H1 (cell line): ENCODE measurements at regions of chr19 and their contacts with region 1.

Region 1: DNA sequence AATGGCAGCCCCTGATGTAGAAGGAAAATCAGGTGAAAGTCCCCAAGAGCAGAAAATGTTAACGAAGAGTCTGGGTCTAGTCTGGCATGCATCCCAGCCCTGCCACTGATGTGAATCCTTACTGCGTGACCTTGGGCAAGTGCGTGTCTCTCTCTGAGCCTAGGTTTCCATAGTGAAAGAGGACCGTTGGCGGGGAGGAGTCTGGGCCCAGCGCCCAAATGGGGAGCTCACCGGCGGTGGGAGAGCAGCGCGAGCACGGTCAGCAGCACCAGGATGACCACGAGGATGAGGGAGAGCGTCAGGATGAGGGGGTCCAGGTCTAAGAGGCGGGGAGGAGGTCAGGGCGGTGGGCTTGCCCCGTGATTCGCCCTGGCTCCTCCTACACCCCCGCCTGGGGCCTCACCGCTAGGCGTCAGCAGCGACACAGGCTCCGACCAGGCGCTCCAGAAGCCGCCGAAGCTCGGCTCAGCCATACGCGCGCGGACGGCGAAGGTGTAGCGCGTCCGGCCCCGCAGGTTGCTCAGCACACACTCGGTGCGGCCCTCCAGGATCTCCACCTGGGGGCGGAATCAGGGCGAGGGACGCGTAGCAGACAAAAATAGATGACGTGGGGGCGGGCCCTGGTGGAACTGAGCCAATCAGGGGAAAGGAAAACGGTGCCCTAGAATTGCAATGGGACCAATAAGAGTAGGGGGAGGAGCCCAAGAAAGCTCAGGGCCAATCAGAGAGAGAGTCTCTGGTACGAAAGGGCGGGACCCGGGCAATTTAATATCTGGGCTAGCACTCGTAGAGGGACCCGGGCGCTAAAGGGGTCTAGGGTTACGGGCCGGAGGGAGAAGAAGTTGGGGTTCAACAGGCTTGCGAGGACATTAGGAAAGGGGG is 3.2 kb downstream of the EPOR start:
- DNase-seq: peak; percentile 93 to 95
- H3K4me3 ChIP-seq: peak overlapping the region; percentile 55 to 79 (median 69)
- H3K27ac ChIP-seq: peak overlapping the region; percentile 76; the same call in 1 of the 2 replicates
- H3K4me1 ChIP-seq: peaks cover 0 to 11% (median 5%) of the 10 kb centered on the region in 4 experiments; a peak in 5 of 7 replicates
- H3K27me3 ChIP-seq: no peaks in the 10 kb centered on the region
- CTCF ChIP-seq: peak; percentile 60 to 71 (median 67)
- EP300 ChIP-seq: no peak; a peak in 1 of 3 replicates
- POLR2A ChIP-seq: peak; percentile 81 to 85
- RAD21 ChIP-seq: peak; percentile 50 to 66

Region 2: GRCh38 chr19:11321191-11322126 is 59.4 kb before region 1 on chr19:
- CTCF ChIA-PET with region 1: interaction called, 13 read pairs
- POLR2A ChIA-PET with region 1: interaction called, 5 read pairs
- DNase-seq: no peak
- H3K4me3 ChIP-seq: no peak overlapping the region
- H3K27ac ChIP-seq: no peak overlapping the region
- H3K4me1 ChIP-seq: peaks cover 0 to 5% (median 0%) of the 10 kb centered on the region in 4 experiments; a peak in 3 of 7 replicates
- H3K27me3 ChIP-seq: no peaks in the 10 kb centered on the region
- CTCF ChIP-seq: peak; percentile 40 to 62 (median 42)
- EP300 ChIP-seq: no peak
- POLR2A ChIP-seq: no peak
- RAD21 ChIP-seq: peak in 1 of 2 experiments; percentile 37; a peak in 1 of 4 replicates

Region 3: DNA sequence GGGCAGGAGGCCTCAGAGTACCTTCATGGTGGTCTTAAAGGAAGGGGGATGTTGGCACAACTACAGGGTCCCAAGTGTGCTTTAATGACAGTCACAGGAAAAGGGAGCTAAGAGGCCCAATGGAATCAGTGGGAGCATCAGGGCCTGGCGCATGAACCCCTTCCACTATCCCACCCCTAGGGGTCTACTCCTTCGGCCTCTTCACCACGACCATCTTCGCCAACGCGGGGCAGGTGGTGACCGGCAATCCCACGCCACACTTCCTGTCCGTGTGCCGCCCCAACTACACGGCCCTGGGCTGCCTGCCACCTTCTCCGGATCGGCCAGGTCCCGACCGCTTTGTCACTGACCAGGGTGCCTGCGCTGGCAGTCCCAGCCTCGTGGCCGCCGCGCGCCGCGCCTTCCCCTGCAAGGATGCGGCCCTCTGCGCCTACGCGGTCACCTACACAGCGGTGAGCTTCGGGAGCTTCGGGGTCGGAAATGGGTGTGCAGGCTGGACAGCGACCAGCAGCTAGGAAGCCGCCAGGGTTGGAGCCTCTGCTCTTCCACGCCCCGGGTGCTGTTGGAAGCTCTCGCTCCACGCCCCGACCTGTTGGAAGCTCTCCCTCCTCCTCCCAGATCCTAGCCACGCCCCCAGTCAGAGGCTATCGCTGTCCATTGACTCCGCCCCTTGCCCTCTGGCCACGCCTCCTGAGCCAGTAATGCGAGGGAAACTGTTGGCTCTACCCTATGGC is 19.7 kb before region 1 on chr19:
- CTCF ChIA-PET with region 1: interaction called, 49 read pairs
- POLR2A ChIA-PET with region 1: interaction called, 34 read pairs
- DNase-seq: peak in 1 of 2 experiments; percentile 100
- H3K4me3 ChIP-seq: peak overlapping the region; percentile 46 to 62 (median 56)
- H3K27ac ChIP-seq: 0 out of 2 replicates have a peak overlapping the region, but pooled peaks have one; percentile 19
- H3K4me1 ChIP-seq: peaks cover 0 to 9% (median 5%) of the 10 kb centered on the region in 4 experiments
- H3K27me3 ChIP-seq: peaks cover 0 to 11% (median 5%) of the 10 kb centered on the region in 4 experiments; a peak in 3 of 7 replicates
- CTCF ChIP-seq: peak; percentile 19 to 44 (median 44); a peak in 3 of 4 replicates
- EP300 ChIP-seq: no peak
- POLR2A ChIP-seq: peak in 1 of 2 experiments; percentile 46; a peak in 1 of 3 replicates
- RAD21 ChIP-seq: no peak

Region 4: GRCh38 chr19:11399667-11400066 is 18.8 kb after region 1 on chr19:
- CTCF ChIA-PET with region 1: interaction called, 17 read pairs
- POLR2A ChIA-PET with region 1: interaction called, 16 read pairs
- DNase-seq: no peak
- H3K4me3 ChIP-seq: no peak overlapping the region
- H3K27ac ChIP-seq: no peak overlapping the region
- H3K4me1 ChIP-seq: peaks cover 0 to 2% (median 0%) of the 10 kb centered on the region in 4 experiments; a peak in 1 of 7 replicates
- H3K27me3 ChIP-seq: no peaks in the 10 kb centered on the region
- CTCF ChIP-seq: no peak
- EP300 ChIP-seq: no peak
- POLR2A ChIP-seq: no peak
- RAD21 ChIP-seq: no peak

Region 5: DNA sequence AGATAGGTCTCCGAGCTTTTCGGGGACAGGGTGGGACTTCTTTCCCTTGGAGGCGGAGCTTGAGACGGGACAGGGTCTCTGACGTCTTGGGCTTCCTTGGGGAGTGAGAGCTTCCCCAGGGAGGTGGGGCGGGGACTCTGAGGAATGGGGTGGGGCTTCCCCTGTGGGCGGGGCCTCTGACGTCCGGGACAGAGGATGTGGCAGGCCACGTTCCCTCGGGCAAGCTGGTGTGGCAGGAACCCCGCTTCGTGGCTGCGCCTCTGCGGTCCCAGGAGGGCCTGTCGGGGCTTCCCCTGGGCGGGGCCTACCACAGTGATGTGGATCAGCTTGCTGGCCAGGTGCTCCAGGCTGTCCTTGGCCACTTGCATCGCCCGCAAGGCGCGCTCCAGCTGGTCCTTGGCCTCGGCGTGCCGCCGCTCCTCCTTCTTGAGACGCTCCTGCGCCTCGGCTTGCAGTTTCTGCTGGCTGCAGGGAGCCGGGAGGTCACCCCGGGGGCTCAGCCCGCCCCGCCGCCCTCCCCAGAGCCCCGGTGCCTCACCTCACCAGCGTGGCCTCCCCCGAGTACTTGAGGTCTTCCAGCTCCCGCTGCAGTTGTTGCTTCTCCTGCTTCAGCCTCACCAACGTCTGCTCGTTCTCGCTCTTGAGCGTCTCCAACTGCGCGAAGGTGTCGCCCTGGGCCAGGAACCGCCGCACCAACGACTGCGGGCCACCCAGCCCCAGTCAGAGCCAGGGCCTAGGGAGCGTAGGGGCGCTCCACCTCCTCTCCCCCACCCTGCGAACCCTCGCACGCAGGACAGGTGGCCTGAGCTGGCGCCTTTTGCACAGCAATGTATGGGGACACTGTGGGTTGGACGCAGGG is 41.5 kb after region 1 on chr19:
- CTCF ChIA-PET with region 1: interaction called, 197 read pairs
- POLR2A ChIA-PET with region 1: interaction called, 48 read pairs
- DNase-seq: peak; percentile 88 to 99
- H3K4me3 ChIP-seq: peak overlapping the region; percentile 37 to 76 (median 53)
- H3K27ac ChIP-seq: no peak overlapping the region
- H3K4me1 ChIP-seq: peaks cover 0 to 14% (median 12%) of the 10 kb centered on the region in 4 experiments; a peak in 5 of 7 replicates
- H3K27me3 ChIP-seq: peaks cover 2 to 28% (median 21%) of the 10 kb centered on the region in 4 experiments
- CTCF ChIP-seq: no peak
- EP300 ChIP-seq: no peak
- POLR2A ChIP-seq: peak in 1 of 2 experiments; percentile 60; a peak in 2 of 3 replicates
- RAD21 ChIP-seq: no peak

Region 6: GRCh38 chr19:11446652-11447301 is 65.9 kb after region 1 on chr19:
- CTCF ChIA-PET with region 1: interaction called, 192 read pairs
- POLR2A ChIA-PET with region 1: interaction called, 8 read pairs
- DNase-seq: peak in 1 of 2 experiments; percentile 95
- H3K4me3 ChIP-seq: no peak overlapping the region
- H3K27ac ChIP-seq: no peak overlapping the region
- H3K4me1 ChIP-seq: peaks cover under 1 to 4% (median 2%) of the 10 kb centered on the region in 4 experiments; a peak in 6 of 7 replicates
- H3K27me3 ChIP-seq: no peaks in the 10 kb centered on the region
- CTCF ChIP-seq: peak; percentile 91 to 99 (median 91)
- EP300 ChIP-seq: no peak
- POLR2A ChIP-seq: no peak
- RAD21 ChIP-seq: peak; percentile 90 to 95

Region 7: GRCh38 chr19:11482384-11483050 is 101.6 kb after region 1 on chr19:
- CTCF ChIA-PET with region 1: interaction called, 12 read pairs
- POLR2A ChIA-PET with region 1: interaction called, 7 read pairs
- DNase-seq: peak; percentile 53 to 95
- H3K4me3 ChIP-seq: peak overlapping the region; percentile 0 to 56 (median 9); a peak in 2 of 8 replicates
- H3K27ac ChIP-seq: no peak overlapping the region
- H3K4me1 ChIP-seq: peaks cover 0 to 17% (median 5%) of the 10 kb centered on the region in 4 experiments; a peak in 5 of 7 replicates
- H3K27me3 ChIP-seq: peaks cover 20 to 26% (median 23%) of the 10 kb centered on the region in 4 experiments
- CTCF ChIP-seq: peak; percentile 93 to 97 (median 96)
- EP300 ChIP-seq: peak in 1 of 2 experiments; percentile 53; a peak in 1 of 3 replicates
- POLR2A ChIP-seq: 0 out of 3 replicates have a peak, but pooled peaks of 1 of the 2 experiments have one; percentile 17
- RAD21 ChIP-seq: peak; percentile 86 to 87